GM12878 (cell line): ENCODE measurements at regions of chr7 and their contacts with region 1.

Region 1: DNA sequence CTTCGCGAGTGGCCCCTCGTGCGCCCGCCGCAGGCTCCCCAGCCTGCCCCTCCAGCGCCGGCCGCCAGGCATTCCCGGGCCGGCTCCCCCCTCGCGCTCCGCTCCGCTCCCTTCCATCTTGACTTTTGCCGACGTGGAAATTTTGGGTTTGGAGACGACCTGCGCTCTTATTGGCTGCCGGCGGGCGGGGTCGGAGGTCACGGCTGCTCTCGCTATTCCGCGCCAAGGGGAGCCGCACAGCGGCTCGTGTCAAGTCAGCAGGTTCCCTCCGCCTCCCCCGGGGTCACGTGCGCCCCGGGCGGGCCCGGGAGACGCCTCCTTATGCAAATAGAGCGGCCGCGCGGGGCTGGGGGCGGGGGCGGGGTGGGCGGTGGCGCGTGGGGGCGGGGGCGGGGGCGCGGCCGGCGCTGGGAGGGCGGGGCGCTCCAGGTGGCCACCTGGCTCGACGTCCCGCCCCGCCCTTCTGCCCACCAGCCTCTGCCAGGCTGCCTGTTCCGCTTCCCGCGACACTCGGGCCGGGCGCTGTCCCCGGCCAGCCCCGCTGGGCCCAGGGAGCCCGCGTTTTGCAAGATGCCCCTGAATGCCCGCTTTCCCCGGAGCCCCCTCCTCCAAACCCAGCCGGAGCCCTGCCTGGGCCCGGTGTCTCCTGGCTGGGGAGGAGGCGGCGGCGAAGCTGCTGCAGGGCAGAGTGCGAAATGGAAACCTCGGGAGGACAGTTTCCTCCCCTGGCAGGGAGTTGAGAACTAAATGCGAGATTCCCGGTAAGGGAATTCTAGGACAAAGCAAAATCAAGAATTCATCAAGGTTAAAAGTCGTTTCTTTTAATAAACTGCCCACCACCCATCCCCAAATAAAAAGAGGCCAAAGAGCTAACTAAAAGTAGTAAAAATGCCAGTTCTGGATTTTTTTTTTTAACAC is 200.7 kb upstream of the NFE2L3 start:
- DNase-seq: peak; percentile 69
- ATAC-seq: peak; percentile 89
- H3K4me3 ChIP-seq: peak overlapping the region; percentile 86
- H3K27ac ChIP-seq: peak overlapping the region; percentile 49
- H3K4me1 ChIP-seq: peaks cover 23% of the 10 kb centered on the region
- H3K27me3 ChIP-seq: no peaks in the 10 kb centered on the region
- CTCF ChIP-seq: no peak
- EP300 ChIP-seq: no peak
- POLR2A ChIP-seq: peak; percentile 68
- RAD21 ChIP-seq: no peak

Region 2: GRCh38 chr7:25908154-25908949 is 42.9 kb before region 1 on chr7:
- CTCF ChIA-PET with region 1: interaction called, 7 read pairs
- POLR2A ChIA-PET with region 1: no interaction called
- RAD21 ChIA-PET with region 1: interaction called, 3 read pairs
- SMC1A ChIA-PET with region 1: interaction called, 16 read pairs
- in situ Hi-C with region 1: no loop called
- intact Hi-C with region 1: no loop called
- DNase-seq: no peak
- ATAC-seq: peak; percentile 73
- H3K4me3 ChIP-seq: no peak overlapping the region
- H3K27ac ChIP-seq: no peak overlapping the region
- H3K4me1 ChIP-seq: peaks cover 14% of the 10 kb centered on the region
- H3K27me3 ChIP-seq: no peaks in the 10 kb centered on the region
- CTCF ChIP-seq: no peak
- EP300 ChIP-seq: no peak
- POLR2A ChIP-seq: no peak
- RAD21 ChIP-seq: no peak

Region 3: GRCh38 chr7:25979605-25980004 is 28.3 kb after region 1 on chr7:
- CTCF ChIA-PET with region 1: no interaction called
- POLR2A ChIA-PET with region 1: no interaction called
- RAD21 ChIA-PET with region 1: no interaction called
- SMC1A ChIA-PET with region 1: no interaction called
- in situ Hi-C with region 1: no loop called
- intact Hi-C with region 1: no loop called
- DNase-seq: no peak
- ATAC-seq: no peak
- H3K4me3 ChIP-seq: no peak overlapping the region
- H3K27ac ChIP-seq: no peak overlapping the region
- H3K4me1 ChIP-seq: no peaks in the 10 kb centered on the region
- H3K27me3 ChIP-seq: no peaks in the 10 kb centered on the region
- CTCF ChIP-seq: no peak
- EP300 ChIP-seq: no peak
- POLR2A ChIP-seq: no peak
- RAD21 ChIP-seq: no peak

Region 4: DNA sequence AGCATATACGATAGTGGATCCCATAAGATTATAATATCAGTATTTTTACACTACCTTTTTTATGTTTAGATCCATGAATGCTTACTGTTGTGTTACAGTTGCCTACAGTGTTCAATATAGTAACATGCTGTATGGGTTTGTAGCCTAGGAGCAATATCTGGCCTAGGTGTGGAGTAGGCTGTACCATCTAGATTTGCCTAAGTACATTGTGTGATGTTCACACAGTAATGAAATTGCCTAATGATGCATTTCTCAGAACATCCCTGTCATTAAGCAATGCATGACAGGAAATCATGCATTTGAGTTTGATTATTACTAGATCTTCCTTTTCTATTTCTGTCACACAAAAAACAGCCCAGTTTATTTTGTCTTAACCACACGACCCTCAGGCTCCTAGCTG is 264.8 kb after region 1 on chr7:
- CTCF ChIA-PET with region 1: no interaction called
- POLR2A ChIA-PET with region 1: no interaction called
- RAD21 ChIA-PET with region 1: no interaction called
- SMC1A ChIA-PET with region 1: no interaction called
- in situ Hi-C with region 1: no loop called
- intact Hi-C with region 1: no loop called
- DNase-seq: no peak
- ATAC-seq: peak; percentile 35; the same call in 2 of the 3 replicates
- H3K4me3 ChIP-seq: no peak overlapping the region
- H3K27ac ChIP-seq: no peak overlapping the region
- H3K4me1 ChIP-seq: no peaks in the 10 kb centered on the region
- H3K27me3 ChIP-seq: no peaks in the 10 kb centered on the region; a peak in 1 of 4 replicates
- CTCF ChIP-seq: no peak
- EP300 ChIP-seq: no peak
- POLR2A ChIP-seq: no peak
- RAD21 ChIP-seq: no peak